Heart left ventricle (tissue), 16 donors: ENCODE measurements at regions of chr2 and their contacts with region 1.

Region 1: DNA sequence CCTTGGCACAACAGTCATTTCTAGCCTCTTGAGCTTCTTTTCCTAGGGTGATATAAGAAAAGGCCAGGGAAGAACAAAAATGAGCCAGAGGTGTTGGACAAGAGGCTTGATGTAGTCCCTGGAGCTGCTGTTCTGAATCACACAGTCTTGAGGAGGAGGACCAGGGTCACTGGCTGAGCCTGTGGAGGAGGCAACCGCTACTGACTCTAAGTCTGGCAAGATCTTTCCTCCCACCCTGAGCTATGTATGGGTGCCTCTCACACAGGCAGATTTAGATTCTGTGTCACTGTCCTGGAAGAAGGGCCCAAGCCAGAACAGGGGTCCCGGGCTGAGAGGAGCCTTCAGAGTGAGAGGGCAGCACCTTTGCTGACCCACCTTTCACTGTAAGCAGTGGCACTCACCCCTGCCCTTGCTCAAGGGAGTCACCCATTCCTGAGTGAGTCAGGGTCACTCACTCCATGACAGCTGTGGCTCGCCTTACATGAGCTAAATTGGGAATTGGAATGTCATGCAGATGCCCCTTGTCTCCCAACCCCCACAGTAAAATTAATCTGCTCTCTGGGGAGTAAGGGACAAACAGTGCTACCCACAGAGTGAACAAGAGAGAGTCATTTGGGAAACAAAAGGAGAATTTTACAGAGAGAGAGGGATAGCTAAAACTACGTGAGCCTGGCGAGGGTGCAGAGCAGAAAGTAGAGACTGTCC is at the start of gene TRIM54:
- DNase-seq: peak in 3 of 5 donors; percentile 53 to 77 (median 69)
- ATAC-seq: peak; percentile 83 to 90 (median 88)
- H3K4me3 ChIP-seq: peak within 1 kb of the TSS; percentile 32 to 68 (median 54)
- H3K27ac ChIP-seq: peak within 1 kb of the TSS; percentile 74 to 99 (median 90)
- H3K4me1 ChIP-seq: peaks cover 0 to 32% (median 10%) of the 10 kb centered on the region in 12 donors
- H3K27me3 ChIP-seq: peaks cover 0 to 7% (median 0%) of the 10 kb centered on the region in 9 donors
- CTCF ChIP-seq: no peak
- POLR2A ChIP-seq: peak in 1 of 2 donors; percentile 56
- total RNA-seq, gene TRIM54: 175 to 329 (median 241) TPM

Region 2: GRCh38 chr2:26942543-26943295 is 339.3 kb before region 1 on chr2:
- intact Hi-C with region 1: no loop called
- DNase-seq: peak; percentile 44 to 73 (median 50)
- ATAC-seq: peak in 3 of 4 donors; percentile 33 to 60 (median 36)
- H3K4me3 ChIP-seq: no peak overlapping the region
- H3K27ac ChIP-seq: no peak overlapping the region
- H3K4me1 ChIP-seq: peaks cover 0 to 12% (median 8%) of the 10 kb centered on the region in 12 donors
- H3K27me3 ChIP-seq: peaks cover 0 to 27% (median 3%) of the 10 kb centered on the region in 9 donors
- CTCF ChIP-seq: peak; percentile 71 to 89 (median 84)
- POLR2A ChIP-seq: no peak

Region 3: DNA sequence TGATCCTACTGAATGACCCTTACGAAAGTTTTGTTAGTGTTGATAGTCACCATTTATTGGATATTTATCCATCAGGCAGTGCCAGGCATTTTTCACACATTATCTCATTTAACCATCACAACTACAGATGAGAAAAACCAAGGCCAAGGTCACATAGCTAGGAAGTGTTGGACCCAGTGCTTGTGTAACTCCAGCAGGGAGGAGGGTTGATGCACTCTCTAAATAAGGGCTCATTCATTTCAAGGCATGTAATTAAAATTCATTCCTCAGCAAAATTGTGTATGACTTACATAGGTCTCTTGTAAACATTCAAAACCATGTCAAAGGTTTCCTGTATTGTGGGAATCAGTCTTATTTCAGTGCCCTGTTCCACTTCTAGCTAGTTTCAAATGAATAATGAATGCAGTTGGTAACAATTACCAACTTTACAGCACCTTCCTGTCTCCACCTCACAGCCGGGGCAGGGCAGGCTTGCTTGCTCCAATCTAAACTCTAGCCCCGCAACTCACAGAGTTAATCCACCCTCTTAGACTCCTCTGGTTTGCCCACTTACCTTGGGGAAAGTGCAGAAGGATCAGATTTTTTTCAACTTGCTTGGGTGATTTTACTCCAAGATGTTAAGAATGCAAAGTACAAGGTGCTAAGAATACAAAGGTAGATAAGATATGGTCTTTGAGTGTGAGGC is 317.4 kb before region 1 on chr2:
- intact Hi-C with region 1: loop called in 6 of 10 experiments (anchors 2 to 10 kb)
- DNase-seq: no peak
- ATAC-seq: no peak
- H3K4me3 ChIP-seq: no peak overlapping the region
- H3K27ac ChIP-seq: no peak overlapping the region
- H3K4me1 ChIP-seq: peaks cover 0 to 7% (median 0%) of the 10 kb centered on the region in 12 donors
- H3K27me3 ChIP-seq: peaks cover 0 to 8% (median 0%) of the 10 kb centered on the region in 9 donors
- CTCF ChIP-seq: no peak
- POLR2A ChIP-seq: no peak

Region 4: DNA sequence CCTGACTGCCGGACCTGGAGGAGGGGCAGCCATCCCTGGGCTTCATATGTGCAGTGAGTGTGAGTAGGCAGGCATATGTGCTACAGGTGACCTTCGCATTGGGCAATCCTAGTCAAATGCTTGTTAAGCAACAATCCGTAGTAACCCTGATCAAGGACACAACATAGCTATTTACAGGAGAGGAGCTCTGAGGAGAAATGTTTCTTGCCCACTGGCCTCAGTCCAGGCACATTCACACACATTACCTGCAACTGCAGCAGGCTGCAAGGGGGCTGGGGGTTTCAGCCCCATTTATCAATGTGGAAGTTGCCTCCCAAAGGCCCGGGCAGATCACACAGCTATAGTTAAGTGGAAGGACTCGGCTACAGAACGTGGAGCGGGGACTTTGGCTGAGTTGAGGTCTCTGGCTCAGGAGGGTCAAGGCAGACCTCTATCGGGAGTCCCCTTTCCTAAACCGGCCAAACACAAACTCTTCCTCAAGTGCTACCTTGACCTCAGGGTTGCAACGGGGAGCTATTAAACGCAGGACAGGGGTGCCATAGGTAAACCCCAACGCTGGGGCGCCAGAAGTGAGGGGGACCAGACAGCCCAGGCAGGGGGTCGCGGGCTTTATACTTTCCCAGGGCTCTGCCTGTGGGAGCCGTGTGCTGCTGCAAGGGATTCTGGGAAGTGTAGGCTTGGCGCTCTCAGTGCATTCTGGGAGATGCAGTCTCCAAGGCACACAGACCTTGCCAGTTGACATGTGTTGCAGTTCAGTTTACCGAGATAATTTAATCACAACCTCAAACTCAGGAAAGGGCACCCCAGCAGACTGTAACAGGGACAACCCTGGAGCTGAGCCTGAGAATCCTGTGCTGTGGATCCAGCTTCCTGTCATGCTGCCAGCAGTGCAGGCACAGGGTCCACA is 186.0 kb before region 1 on chr2:
- intact Hi-C with region 1: loop called (anchors 2 to 10 kb)
- DNase-seq: peak; percentile 65 to 77 (median 71)
- ATAC-seq: peak; percentile 62 to 89 (median 86)
- H3K4me3 ChIP-seq: peak overlapping the region in 9 of 12 donors; percentile 14 to 50 (median 43)
- H3K27ac ChIP-seq: peak overlapping the region in 6 of 12 donors; percentile 7 to 68 (median 56)
- H3K4me1 ChIP-seq: peaks cover 0 to 20% (median 8%) of the 10 kb centered on the region in 12 donors
- H3K27me3 ChIP-seq: no peaks in the 10 kb centered on the region
- CTCF ChIP-seq: peak in 1 of 12 donors; percentile 14
- POLR2A ChIP-seq: no peak

Region 5: GRCh38 chr2:27249891-27250651 is 31.9 kb before region 1 on chr2:
- intact Hi-C with region 1: loop called in 8 of 10 experiments (anchors 1 to 5 kb)
- DNase-seq: peak; percentile 43 to 78 (median 62)
- ATAC-seq: peak; percentile 62 to 88 (median 82)
- H3K4me3 ChIP-seq: no peak overlapping the region
- H3K27ac ChIP-seq: no peak overlapping the region
- H3K4me1 ChIP-seq: peaks cover 0 to 14% (median 4%) of the 10 kb centered on the region in 12 donors
- H3K27me3 ChIP-seq: peaks cover 0 to 32% (median 0%) of the 10 kb centered on the region in 9 donors
- CTCF ChIP-seq: peak; percentile 40 to 75 (median 68)
- POLR2A ChIP-seq: no peak

Region 6: GRCh38 chr2:27303093-27304025 is 21.4 kb after region 1 on chr2:
- intact Hi-C with region 1: loop called in 1 of 10 experiments (anchors 2 kb)
- DNase-seq: peak in 3 of 5 donors; percentile 51 to 68 (median 63)
- ATAC-seq: peak; percentile 45 to 73 (median 60)
- H3K4me3 ChIP-seq: peak overlapping the region in 11 of 12 donors; percentile 4 to 52 (median 36)
- H3K27ac ChIP-seq: peak overlapping the region in 9 of 12 donors; percentile 27 to 66 (median 43)
- H3K4me1 ChIP-seq: peaks cover 0 to 30% (median 14%) of the 10 kb centered on the region in 12 donors
- H3K27me3 ChIP-seq: peaks cover 0 to 39% (median 23%) of the 10 kb centered on the region in 9 donors
- CTCF ChIP-seq: peak; percentile 75 to 92 (median 89)
- POLR2A ChIP-seq: no peak